ENCODE measurements at regions of chr19 and their contacts with region 1.

Region 1: DNA sequence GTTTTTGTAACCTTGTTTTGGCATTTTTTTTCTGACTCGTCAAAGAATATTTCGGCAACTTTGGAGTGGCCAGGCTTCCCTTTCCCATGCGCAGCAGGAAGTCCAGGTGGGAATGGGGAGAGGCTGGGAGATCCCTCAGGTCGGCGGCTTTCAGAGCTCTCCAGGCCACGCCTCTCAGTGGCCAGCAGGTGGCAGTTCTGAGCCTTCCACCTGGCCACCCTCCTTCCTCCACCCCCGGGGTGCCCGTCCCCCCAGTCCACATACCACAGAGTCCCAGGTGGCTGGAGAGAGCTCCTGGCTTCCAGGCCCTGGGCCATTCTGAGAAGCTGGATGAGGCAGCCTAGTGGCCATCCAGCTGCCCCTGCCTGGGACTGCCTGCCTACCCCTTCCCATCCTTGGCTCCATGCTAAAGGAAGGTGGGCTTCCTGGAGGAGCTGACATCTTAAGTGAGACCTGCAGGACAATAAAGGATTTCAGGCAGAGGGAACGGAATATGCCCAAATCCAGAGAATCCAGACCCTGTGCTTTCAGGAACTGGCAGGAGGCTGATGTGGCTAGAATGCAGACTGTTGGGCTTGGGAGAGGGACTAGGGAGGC is 46.3 kb downstream of the CCNE1 start:
- DNase-seq: peak; percentile 54
- ATAC-seq: peak; percentile 81
- H3K4me3 Mint-ChIP-seq: no peak overlapping the region
- H3K27ac Mint-ChIP-seq: no peak overlapping the region
- H3K4me1 Mint-ChIP-seq: peaks cover 2% of the 10 kb centered on the region
- H3K27me3 Mint-ChIP-seq: peaks cover 6% of the 10 kb centered on the region

Region 2: DNA sequence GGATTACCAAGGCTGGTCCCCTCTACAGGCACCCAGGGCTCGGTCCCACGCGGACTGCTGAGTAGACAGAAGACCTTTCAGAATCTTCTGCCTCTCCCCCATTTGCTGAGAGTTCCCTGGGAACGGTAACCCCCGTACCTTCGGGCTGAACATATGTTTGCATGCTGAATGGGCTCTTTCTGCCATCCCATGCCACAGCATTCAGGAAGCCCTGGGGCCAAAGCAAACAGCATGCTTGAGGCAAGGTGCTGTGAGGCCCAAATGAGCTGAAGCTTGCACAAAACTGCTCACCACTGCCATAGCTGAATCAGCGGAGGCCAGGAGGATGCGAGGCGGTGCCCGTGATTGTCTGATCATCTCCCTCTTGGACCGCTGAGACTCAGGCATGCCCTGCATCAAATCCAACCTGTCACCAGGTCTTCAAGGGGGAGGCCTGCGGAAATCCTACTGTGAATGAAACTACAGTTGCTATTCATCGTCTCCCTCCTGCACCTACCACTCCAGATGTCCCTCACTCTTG is 126.7 kb before region 1 on chr19:
- CTCF ChIA-PET with region 1: interaction called, 12 read pairs
- POLR2A ChIA-PET with region 1: no interaction called
- DNase-seq: no peak
- ATAC-seq: no peak
- H3K4me3 Mint-ChIP-seq: no peak overlapping the region
- H3K27ac Mint-ChIP-seq: no peak overlapping the region
- H3K4me1 Mint-ChIP-seq: no peaks in the 10 kb centered on the region
- H3K27me3 Mint-ChIP-seq: peaks cover 23% of the 10 kb centered on the region

Region 3: GRCh38 chr19:29837448-29837981 is 20.6 kb before region 1 on chr19:
- CTCF ChIA-PET with region 1: interaction called, 13 read pairs
- POLR2A ChIA-PET with region 1: interaction called, 8 read pairs
- DNase-seq: peak; percentile 51
- ATAC-seq: peak; percentile 77
- H3K4me3 Mint-ChIP-seq: peak overlapping the region; percentile 71
- H3K27ac Mint-ChIP-seq: peak overlapping the region; percentile 92
- H3K4me1 Mint-ChIP-seq: peaks cover 46% of the 10 kb centered on the region
- H3K27me3 Mint-ChIP-seq: peaks cover 3% of the 10 kb centered on the region

Region 4: DNA sequence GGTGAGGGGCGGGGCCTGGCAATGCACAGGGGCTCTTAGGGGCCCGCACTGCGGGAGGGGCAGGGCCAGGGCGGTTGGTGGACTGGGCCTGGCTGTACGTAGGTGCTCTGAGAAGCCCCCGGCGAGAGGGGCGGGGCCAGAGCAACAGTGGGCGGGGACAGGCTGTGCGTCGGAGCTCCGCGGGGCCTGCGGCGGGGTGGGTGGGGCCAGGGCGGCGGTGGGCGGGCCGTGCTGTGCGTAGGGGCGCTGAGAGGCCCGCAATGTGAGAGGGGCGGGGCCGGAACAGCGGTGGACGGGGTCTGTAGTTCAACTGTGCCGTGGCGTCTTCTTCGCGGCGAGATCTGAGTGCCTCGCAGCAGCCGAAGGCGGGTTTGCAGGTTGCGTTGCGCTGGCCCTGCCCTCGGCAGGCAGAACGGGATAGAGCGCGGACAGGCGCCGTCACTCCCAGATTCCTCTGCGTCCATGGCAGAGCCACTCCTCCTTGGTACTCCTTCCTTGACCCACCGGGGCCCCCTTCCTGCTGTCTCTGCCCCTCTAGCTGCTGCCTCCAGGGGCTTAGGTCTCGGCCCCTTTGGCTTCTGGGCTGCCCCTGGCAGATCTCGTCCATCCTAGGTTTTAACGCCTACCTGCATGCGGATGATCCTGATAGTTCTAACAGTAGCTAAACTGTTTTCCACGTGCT is 13.1 kb before region 1 on chr19:
- CTCF ChIA-PET with region 1: interaction called, 11 read pairs
- POLR2A ChIA-PET with region 1: no interaction called
- DNase-seq: peak; percentile 96
- ATAC-seq: peak; percentile 87
- H3K4me3 Mint-ChIP-seq: peak overlapping the region; percentile 85
- H3K27ac Mint-ChIP-seq: peak overlapping the region; percentile 83
- H3K4me1 Mint-ChIP-seq: peaks cover 14% of the 10 kb centered on the region
- H3K27me3 Mint-ChIP-seq: peaks cover 10% of the 10 kb centered on the region

Region 5: DNA sequence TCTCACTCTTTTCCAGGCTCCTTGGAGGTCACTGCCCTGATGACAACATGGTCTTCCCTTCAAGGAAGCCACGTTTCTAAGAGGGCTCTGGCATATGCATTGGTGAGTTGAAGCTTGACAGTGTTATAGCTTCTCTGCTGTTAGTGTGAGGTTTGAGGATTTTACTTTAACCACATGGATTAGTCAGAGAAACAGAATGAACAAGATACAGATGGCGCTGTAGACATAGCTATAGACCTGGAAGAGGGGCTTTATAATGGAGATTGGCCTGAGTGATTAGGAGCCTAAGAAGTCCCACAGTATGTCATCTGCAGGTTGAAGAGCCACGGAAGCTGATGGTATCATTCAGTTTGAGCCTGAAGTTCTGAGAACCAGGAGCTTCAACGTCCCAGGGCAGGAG is 65.6 kb after region 1 on chr19:
- CTCF ChIA-PET with region 1: no interaction called
- POLR2A ChIA-PET with region 1: no interaction called
- DNase-seq: no peak
- ATAC-seq: no peak
- H3K4me3 Mint-ChIP-seq: no peak overlapping the region
- H3K27ac Mint-ChIP-seq: no peak overlapping the region
- H3K4me1 Mint-ChIP-seq: no peaks in the 10 kb centered on the region
- H3K27me3 Mint-ChIP-seq: no peaks in the 10 kb centered on the region

Region 6: DNA sequence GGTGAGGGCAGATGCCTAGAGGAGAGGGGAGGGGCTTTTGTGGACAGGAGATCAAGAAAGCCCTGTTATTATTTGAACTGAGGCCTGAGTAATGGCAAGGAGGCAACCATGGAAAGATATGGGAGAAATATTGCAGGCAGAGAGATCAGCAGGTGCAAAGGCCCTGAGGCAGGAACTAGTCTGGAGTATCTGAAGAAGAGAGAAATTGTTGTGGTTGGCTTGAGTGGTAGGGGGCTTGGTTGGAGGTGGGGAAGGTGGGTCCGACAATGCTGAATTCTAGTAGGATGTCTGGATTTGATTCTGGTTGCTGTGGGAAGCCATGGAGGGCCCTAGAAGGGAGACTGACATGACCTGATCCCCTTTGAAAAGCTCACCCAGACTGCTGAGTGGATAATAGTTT is 81.5 kb after region 1 on chr19:
- CTCF ChIA-PET with region 1: no interaction called
- POLR2A ChIA-PET with region 1: no interaction called
- DNase-seq: no peak
- ATAC-seq: no peak
- H3K4me3 Mint-ChIP-seq: no peak overlapping the region
- H3K27ac Mint-ChIP-seq: no peak overlapping the region
- H3K4me1 Mint-ChIP-seq: peaks cover 18% of the 10 kb centered on the region
- H3K27me3 Mint-ChIP-seq: no peaks in the 10 kb centered on the region